Right cardiac atrium (tissue), 5 donors: ENCODE measurements at regions of chr5 and their contacts with region 1.

Region 1: GRCh38 chr5:55994574-55995333 is at the start of gene IL6ST:
- DNase-seq: peak; percentile 99
- ATAC-seq: peak; percentile 98
- H3K4me3 ChIP-seq: peak within 1 kb of the TSS; percentile 95
- H3K27ac ChIP-seq: peak within 1 kb of the TSS; percentile 97
- H3K4me1 ChIP-seq: peaks cover 2% of the 10 kb centered on the region
- H3K27me3 ChIP-seq: no peaks in the 10 kb centered on the region
- total RNA-seq, gene IL6ST: 192 to 238 (median 219) TPM

Region 2: DNA sequence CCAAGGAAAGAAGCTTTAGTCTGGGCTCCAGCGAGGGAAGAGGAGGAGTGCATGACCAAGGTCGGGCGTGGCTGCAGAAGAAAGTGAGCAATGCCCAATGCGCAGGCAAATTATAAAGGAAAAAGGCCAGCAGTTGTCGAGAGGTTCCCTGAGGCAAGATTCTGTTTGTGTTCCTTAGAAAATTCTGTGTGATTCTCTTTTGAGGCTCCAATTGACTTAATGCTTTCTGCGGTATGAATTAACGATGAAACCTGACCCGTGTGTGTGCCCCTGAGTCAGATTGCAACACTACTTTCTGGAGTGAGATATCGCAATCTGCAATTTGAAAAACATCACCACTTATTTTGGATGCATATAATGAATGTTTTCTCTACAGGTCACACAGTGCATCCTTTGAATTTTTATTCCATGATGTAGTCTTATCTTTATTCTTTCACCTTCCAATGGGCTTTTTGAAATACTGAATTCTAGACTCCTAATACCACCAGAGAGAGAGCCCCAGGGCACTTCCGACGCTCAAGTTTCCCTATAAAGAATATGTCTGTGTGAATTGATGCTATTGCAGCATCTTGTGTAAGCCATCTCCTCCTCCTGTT is 117.9 kb after region 1 on chr5:
- intact Hi-C with region 1: no loop called
- DNase-seq: no peak
- ATAC-seq: no peak
- H3K4me3 ChIP-seq: no peak overlapping the region
- H3K27ac ChIP-seq: no peak overlapping the region
- H3K4me1 ChIP-seq: no peaks in the 10 kb centered on the region
- H3K27me3 ChIP-seq: no peaks in the 10 kb centered on the region

Region 3: GRCh38 chr5:56175488-56175887 is 180.7 kb after region 1 on chr5:
- intact Hi-C with region 1: loop called in 1 of 4 experiments (anchors 10 kb)
- DNase-seq: peak in 1 of 3 donors; percentile 29
- ATAC-seq: peak; percentile 73 to 88
- H3K4me3 ChIP-seq: no peak overlapping the region
- H3K27ac ChIP-seq: peak overlapping the region; percentile 47
- H3K4me1 ChIP-seq: peaks cover 11% of the 10 kb centered on the region
- H3K27me3 ChIP-seq: no peaks in the 10 kb centered on the region